Activated CD8-positive, alpha-beta T cell treated with anti-CD3 and anti-CD28 coated beads, Interleukin-2, amount 10 ng/mL, durations not matched to agents 7 days and 5 days (primary cell): ENCODE measurements at regions of chr1 and their contacts with region 1.

Region 1: DNA sequence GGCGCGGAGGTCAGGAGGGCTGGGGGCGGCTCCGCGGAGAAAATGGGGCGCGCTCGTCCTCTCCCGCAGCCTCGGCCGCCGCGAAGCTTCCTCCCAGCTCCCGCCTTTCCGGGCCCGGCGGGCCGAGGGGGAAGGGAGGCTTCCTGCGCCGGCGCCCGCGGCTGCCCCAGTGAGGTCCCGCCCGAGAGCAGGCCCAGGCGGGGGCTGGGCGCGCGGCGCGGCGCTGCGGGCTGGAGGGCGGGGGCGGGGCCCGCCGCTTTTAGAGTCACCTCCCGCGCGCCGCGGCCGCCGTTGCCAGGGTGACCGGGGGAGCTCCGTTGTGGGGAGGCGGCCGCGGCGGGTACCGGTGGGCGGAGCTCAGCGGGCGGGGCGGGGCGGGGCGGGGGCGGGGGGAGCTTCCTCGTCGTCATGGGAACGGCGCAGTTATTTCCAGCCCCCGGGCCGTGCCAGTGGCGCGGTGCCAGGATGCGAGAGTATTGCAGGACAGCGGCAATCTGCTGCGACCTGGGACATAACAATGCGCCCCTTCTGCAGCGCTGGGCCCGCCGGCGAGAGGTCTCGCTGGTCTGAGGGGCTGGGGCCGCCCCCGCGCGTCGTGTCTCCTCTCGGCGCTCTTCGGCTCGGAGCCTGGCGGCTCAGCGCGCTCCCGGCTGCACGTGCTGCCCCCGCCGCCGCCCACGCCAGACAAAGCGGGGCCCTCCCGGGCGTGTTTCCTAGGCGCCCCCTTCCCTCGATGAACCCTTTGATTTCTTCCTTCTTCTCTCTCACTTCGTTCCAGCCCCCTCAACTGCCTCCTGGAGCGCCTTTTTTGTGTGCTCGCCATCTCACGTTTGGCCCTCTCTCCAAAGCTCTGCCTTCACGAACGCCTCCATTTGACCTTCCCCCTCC is 16.9 kb downstream of the IER5 start:
- DNase-seq: peak; percentile 93
- ATAC-seq: peak; percentile 81
- H3K4me3 Mint-ChIP-seq: peak overlapping the region; percentile 80
- H3K27ac Mint-ChIP-seq: peak overlapping the region; percentile 74
- H3K4me1 Mint-ChIP-seq: peaks cover 67% of the 10 kb centered on the region
- H3K27me3 Mint-ChIP-seq: peaks cover 37% of the 10 kb centered on the region

Region 2: GRCh38 chr1:181117638-181118449 is 12.5 kb after region 1 on chr1:
- CTCF ChIA-PET with region 1: interaction called, 39 read pairs
- POLR2A ChIA-PET with region 1: no interaction called
- DNase-seq: no peak
- ATAC-seq: no peak
- H3K4me3 Mint-ChIP-seq: no peak overlapping the region
- H3K27ac Mint-ChIP-seq: no peak overlapping the region
- H3K4me1 Mint-ChIP-seq: peaks cover 13% of the 10 kb centered on the region
- H3K27me3 Mint-ChIP-seq: peaks cover 4% of the 10 kb centered on the region

Region 3: DNA sequence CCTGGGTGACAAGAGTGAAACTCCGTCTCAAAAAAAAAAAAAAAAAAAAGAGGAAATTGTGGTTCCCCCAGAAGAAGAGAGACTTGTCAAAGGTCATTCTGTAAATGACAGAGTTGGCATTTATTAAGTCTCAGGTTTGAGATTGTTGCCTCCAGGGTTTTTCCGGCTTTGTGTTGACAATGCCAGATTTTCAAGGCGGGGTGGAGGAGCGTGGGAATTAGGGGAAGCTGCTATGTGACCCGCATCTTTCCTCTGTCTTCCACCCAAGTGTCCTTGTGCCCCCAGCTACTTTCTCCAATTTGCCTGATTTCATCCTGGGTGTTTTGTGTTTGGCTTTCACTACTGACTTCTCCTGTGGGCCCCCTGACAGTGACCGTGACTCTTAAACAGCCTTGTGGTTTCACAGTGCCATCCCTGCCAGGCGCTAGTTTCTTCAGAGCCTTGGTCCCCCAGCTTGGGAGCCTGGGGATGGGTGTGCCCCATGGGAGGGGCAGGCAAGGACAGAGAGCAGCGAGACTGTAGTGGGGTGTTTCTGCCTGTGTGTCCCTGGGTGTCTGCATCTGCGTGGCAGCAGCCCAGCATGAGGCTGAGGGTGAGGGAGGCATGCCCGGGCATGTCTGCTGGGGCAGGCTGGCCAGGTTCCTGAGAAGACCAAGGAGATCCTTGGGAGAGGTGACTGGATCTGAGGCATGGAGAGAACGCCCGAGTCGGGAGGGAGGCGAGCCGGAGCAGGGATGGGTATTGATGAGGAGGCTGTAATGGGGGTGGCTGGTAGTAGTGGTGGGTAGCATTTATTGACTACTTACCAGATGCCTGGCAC is 29.4 kb after region 1 on chr1:
- CTCF ChIA-PET with region 1: interaction called, 395 read pairs
- POLR2A ChIA-PET with region 1: interaction called, 17 read pairs
- DNase-seq: peak; percentile 49
- ATAC-seq: peak; percentile 66
- H3K4me3 Mint-ChIP-seq: peak overlapping the region; percentile 52
- H3K27ac Mint-ChIP-seq: peak overlapping the region; percentile 95
- H3K4me1 Mint-ChIP-seq: peaks cover 82% of the 10 kb centered on the region
- H3K27me3 Mint-ChIP-seq: no peaks in the 10 kb centered on the region